Psoas muscle (tissue), 8 donors: ENCODE measurements at regions of chr17 and their contacts with region 1.

Region 1: GRCh38 chr17:43576563-43577229 is 30.6 kb upstream of the ETV4 start:
- DNase-seq: peak; percentile 61 to 79
- ATAC-seq: peak; percentile 84 to 94 (median 86)
- H3K4me3 ChIP-seq: no peak overlapping the region
- H3K27ac ChIP-seq: no peak overlapping the region
- H3K4me1 ChIP-seq: no peaks in the 10 kb centered on the region
- H3K27me3 ChIP-seq: peaks cover 0 to 2% (median 0%) of the 10 kb centered on the region in 3 donors
- CTCF ChIP-seq: peak; percentile 98

Region 2: DNA sequence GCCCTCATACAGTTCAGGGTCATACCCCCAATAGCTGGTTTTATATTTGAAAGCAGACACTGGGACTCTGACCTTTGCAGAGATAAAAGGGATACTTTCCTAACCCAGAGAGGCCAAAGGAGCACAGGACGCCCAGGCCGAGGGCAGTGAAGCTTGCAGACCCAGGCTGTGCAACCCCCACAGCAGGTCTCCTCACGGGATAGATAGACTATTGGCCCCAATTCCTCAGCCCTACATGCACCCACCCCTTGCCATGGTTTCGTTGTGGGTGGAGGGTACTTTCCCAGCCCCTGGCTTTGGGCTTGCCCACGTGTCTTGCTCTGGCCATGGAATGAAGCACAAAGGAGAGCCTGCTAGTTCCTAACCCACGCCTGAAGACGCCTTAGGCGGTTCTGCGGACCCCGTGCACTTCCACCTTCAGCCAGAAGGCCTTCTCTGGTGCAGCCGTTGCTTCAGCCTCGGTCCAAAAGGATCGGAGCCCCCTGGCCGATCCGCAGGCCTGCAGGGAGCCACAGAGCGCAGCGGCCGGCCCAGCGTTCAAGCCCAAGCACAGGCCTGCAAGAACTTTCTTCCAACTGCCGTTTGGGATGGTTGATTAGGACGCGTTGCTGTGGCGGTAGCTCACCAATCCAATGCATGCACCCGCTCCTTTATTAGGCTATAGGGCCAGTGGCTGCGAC is 441.8 kb before region 1 on chr17:
- intact Hi-C with region 1: no loop called
- DNase-seq: no peak
- ATAC-seq: no peak
- H3K4me3 ChIP-seq: no peak overlapping the region
- H3K27ac ChIP-seq: no peak overlapping the region
- H3K4me1 ChIP-seq: no peaks in the 10 kb centered on the region
- H3K27me3 ChIP-seq: no peaks in the 10 kb centered on the region
- CTCF ChIP-seq: no peak

Region 3: GRCh38 chr17:43524945-43525575 is 51.6 kb before region 1 on chr17:
- intact Hi-C with region 1: loop called in 1 of 2 experiments (anchors 5 kb)
- DNase-seq: no peak
- ATAC-seq: no peak
- H3K4me3 ChIP-seq: no peak overlapping the region
- H3K27ac ChIP-seq: no peak overlapping the region
- H3K4me1 ChIP-seq: peaks cover 8% of the 10 kb centered on the region
- H3K27me3 ChIP-seq: no peaks in the 10 kb centered on the region
- CTCF ChIP-seq: no peak

Region 4: DNA sequence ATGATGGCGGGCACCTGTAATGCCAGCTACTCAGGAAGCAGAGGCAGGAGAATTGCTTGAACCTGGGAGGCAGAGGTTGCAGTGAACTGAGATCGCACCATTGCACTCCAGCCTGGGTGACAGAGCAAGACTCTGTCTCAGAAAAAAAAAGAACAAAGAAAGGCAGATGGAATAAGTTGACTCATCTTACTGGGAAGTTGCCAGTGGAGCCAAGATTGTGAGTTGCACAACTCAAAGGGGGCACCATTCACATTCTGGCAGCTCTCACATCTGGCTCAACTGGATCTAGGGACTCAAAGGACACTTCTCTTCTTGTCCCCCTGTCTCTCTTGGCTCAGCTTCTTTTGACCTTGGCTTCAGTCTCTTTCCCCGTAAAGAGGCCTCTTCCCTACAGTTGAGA is 23.1 kb after region 1 on chr17:
- intact Hi-C with region 1: no loop called
- DNase-seq: no peak
- ATAC-seq: peak in 2 of 4 donors; percentile 32 to 41
- H3K4me3 ChIP-seq: no peak overlapping the region
- H3K27ac ChIP-seq: no peak overlapping the region
- H3K4me1 ChIP-seq: peaks cover 7% of the 10 kb centered on the region
- H3K27me3 ChIP-seq: peaks cover 0 to 1% (median 0%) of the 10 kb centered on the region in 3 donors
- CTCF ChIP-seq: no peak

Region 5: DNA sequence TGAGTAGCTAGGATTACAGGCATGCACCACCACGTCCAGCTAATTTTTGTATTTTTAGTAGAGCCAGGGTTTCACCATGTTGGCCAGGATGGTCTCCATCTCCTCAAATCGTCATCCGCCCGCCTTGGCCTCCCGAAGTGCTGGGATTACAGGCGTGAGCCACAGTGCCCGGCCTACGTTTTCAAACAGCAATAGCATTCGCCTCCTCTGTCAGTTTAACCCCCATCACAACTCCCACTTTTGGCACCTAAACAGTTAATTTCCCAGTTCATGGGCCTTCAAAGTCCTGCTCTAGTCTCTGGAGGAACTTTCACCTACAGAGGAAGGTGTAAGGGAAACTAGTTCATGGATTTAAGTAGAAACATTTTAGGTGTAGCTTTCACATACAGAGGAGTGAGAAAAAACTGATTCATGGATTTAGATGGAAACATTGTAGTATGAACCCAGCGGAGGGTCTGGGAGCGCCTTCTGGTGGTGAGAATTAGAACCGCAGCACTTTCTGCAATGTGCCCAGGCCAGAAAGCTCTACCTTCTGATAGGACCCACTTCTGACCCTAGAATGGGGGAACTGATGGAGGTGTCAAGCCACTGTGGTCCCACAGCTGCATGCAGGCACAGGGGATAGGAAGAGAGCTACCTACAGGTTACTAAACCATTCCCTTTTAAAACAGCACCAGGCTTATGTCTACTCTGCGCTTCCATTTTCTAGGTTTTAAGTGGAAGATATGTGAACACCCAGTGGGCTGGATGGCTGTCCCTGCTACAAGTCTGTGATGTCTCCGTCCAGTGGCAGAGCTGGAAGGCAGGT is 97.0 kb after region 1 on chr17:
- intact Hi-C with region 1: loop called in 1 of 2 experiments (anchors 1 kb)
- DNase-seq: peak; percentile 68 to 77
- ATAC-seq: peak; percentile 65 to 79 (median 68)
- H3K4me3 ChIP-seq: no peak overlapping the region
- H3K27ac ChIP-seq: no peak overlapping the region
- H3K4me1 ChIP-seq: no peaks in the 10 kb centered on the region
- H3K27me3 ChIP-seq: no peaks in the 10 kb centered on the region
- CTCF ChIP-seq: peak; percentile 97

Region 6: GRCh38 chr17:43760254-43760852 is 183.7 kb after region 1 on chr17:
- intact Hi-C with region 1: loop called (anchors 5 kb)
- DNase-seq: peak; percentile 91 to 94
- ATAC-seq: peak; percentile 92 to 95 (median 94)
- H3K4me3 ChIP-seq: no peak overlapping the region
- H3K27ac ChIP-seq: no peak overlapping the region
- H3K4me1 ChIP-seq: peaks cover 6% of the 10 kb centered on the region
- H3K27me3 ChIP-seq: peaks cover 0 to 27% (median 16%) of the 10 kb centered on the region in 3 donors
- CTCF ChIP-seq: peak; percentile 98